Endothelial cell of umbilical vein (primary cell): ENCODE measurements at regions of chr1 and their contacts with region 1.

Region 1: GRCh38 chr1:100597061-100597741 is 59.3 kb downstream of the GPR88 start:
- DNase-seq: peak; percentile 95
- H3K4me3 ChIP-seq: no peak overlapping the region
- H3K27ac ChIP-seq: peak overlapping the region; percentile 93
- H3K4me1 ChIP-seq: peaks cover 28% of the 10 kb centered on the region
- H3K27me3 ChIP-seq: no peaks in the 10 kb centered on the region
- CTCF ChIP-seq: no peak
- POLR2A ChIP-seq: no peak

Region 2: DNA sequence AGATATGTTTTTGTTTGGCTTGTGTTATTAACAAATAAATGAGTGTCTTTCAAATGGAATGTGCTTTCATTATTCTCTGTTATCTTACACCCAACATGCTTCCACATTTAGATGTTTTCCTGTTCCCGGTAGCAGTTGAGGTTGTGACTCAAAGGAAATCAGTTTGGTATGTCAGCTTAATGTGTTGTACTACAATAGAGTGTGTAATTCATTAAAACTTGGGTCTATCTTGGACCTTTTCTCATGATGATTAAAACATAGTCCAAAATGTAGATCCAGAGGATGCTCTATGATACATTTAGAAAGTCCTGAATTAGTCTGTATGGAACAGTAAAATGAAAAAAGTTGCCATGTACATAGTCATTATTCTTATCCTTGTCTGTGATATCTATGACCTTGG is 304.5 kb before region 1 on chr1:
- CTCF ChIA-PET with region 1: no interaction called
- POLR2A ChIA-PET with region 1: no interaction called
- dilution Hi-C with region 1: no loop called
- intact Hi-C with region 1: loop called (anchors 2 kb)
- DNase-seq: peak; percentile 96
- H3K4me3 ChIP-seq: no peak overlapping the region
- H3K27ac ChIP-seq: peak overlapping the region; percentile 97
- H3K4me1 ChIP-seq: peaks cover 43% of the 10 kb centered on the region
- H3K27me3 ChIP-seq: no peaks in the 10 kb centered on the region
- CTCF ChIP-seq: no peak
- POLR2A ChIP-seq: peak; percentile 82

Region 3: GRCh38 chr1:100538913-100539835 is 58.0 kb before region 1 on chr1:
- CTCF ChIA-PET with region 1: no interaction called
- POLR2A ChIA-PET with region 1: no interaction called
- dilution Hi-C with region 1: no loop called
- intact Hi-C with region 1: loop called (anchors 1 kb)
- DNase-seq: peak; percentile 32
- H3K4me3 ChIP-seq: peak overlapping the region; percentile 28 to 44 (median 38)
- H3K27ac ChIP-seq: no peak overlapping the region
- H3K4me1 ChIP-seq: peaks cover 15% of the 10 kb centered on the region
- H3K27me3 ChIP-seq: peaks cover 0 to 7% of the 10 kb centered on the region in 2 experiments
- CTCF ChIP-seq: peak; percentile 17 to 49
- POLR2A ChIP-seq: no peak

Region 4: DNA sequence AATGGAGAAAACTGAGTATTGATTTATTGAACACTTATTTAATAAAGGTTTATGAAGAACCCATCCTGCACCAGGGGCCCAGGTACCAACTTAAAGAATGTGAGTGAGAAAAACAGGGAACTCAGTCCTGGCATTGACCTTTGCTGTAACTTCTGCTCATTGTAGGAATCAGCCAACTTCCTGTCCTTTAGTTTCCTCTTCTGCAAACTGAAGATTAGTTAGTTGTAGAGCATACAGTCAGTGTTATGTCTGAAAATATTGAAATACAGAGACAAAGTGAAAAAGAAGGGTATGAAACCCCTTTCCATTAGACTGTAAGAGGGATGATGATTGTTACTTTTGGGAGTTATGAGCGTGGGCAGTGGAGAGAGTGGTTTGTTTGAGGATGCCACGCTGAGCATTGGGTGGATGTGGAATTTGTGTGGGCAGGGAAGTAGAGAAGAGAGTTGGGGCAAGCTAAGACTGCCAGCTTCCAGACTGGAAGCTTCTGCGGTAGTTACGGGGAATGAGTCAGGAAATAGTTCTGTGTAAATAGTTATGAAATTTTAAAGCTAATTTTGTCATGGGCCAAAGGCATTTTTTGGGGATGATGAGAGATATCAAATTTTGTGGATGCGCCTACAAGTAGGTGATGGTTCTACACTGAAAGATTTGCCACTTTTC is 30.0 kb after region 1 on chr1:
- CTCF ChIA-PET with region 1: no interaction called
- POLR2A ChIA-PET with region 1: no interaction called
- dilution Hi-C with region 1: no loop called
- intact Hi-C with region 1: loop called (anchors 1 kb)
- DNase-seq: peak; percentile 76
- H3K4me3 ChIP-seq: no peak overlapping the region
- H3K27ac ChIP-seq: peak overlapping the region; percentile 49
- H3K4me1 ChIP-seq: peaks cover 36% of the 10 kb centered on the region
- H3K27me3 ChIP-seq: no peaks in the 10 kb centered on the region
- CTCF ChIP-seq: no peak
- POLR2A ChIP-seq: no peak

Region 5: GRCh38 chr1:100708476-100709062 is 111.4 kb after region 1 on chr1:
- CTCF ChIA-PET with region 1: no interaction called
- POLR2A ChIA-PET with region 1: no interaction called
- dilution Hi-C with region 1: no loop called
- intact Hi-C with region 1: loop called (anchors 2 kb)
- DNase-seq: peak; percentile 85
- H3K4me3 ChIP-seq: no peak overlapping the region
- H3K27ac ChIP-seq: peak overlapping the region; percentile 61
- H3K4me1 ChIP-seq: peaks cover 25% of the 10 kb centered on the region
- H3K27me3 ChIP-seq: no peaks in the 10 kb centered on the region
- CTCF ChIP-seq: no peak
- POLR2A ChIP-seq: no peak

Region 6: DNA sequence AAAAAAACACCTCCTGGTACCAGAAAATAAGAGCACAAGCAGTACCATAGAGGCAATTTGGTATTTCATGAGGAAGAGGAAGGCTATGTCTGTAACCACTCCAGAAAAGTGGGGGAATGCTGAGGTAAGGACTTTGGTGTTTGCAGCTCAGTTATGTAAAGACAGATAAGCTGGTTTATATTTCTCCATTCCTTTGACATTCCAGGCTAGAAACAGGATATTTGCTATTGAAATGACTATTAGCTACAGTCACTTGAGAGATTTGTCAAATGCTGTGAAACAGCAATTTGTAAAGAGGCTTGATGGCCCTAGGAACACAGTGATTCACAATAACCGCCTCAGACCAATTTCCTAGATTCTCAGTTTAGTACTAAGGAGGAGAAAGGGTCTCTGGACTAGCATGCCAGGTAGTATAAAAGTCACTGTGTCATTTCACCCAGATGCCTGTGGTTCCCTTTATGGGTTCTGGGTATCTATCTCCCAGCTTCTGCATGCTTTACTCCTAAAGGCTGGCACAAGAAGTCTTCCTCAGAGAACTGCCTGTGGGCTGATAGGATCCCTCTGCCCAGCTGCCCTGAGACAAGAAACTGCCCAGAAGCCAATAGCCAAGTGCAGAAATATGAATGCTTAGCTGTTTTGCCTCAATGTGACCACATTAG is 202.9 kb after region 1 on chr1:
- CTCF ChIA-PET with region 1: no interaction called
- POLR2A ChIA-PET with region 1: no interaction called
- dilution Hi-C with region 1: no loop called
- intact Hi-C with region 1: loop called (anchors 1 kb)
- DNase-seq: no peak
- H3K4me3 ChIP-seq: no peak overlapping the region
- H3K27ac ChIP-seq: peak overlapping the region; percentile 92
- H3K4me1 ChIP-seq: peaks cover 23% of the 10 kb centered on the region
- H3K27me3 ChIP-seq: no peaks in the 10 kb centered on the region
- CTCF ChIP-seq: no peak
- POLR2A ChIP-seq: no peak

Region 7: DNA sequence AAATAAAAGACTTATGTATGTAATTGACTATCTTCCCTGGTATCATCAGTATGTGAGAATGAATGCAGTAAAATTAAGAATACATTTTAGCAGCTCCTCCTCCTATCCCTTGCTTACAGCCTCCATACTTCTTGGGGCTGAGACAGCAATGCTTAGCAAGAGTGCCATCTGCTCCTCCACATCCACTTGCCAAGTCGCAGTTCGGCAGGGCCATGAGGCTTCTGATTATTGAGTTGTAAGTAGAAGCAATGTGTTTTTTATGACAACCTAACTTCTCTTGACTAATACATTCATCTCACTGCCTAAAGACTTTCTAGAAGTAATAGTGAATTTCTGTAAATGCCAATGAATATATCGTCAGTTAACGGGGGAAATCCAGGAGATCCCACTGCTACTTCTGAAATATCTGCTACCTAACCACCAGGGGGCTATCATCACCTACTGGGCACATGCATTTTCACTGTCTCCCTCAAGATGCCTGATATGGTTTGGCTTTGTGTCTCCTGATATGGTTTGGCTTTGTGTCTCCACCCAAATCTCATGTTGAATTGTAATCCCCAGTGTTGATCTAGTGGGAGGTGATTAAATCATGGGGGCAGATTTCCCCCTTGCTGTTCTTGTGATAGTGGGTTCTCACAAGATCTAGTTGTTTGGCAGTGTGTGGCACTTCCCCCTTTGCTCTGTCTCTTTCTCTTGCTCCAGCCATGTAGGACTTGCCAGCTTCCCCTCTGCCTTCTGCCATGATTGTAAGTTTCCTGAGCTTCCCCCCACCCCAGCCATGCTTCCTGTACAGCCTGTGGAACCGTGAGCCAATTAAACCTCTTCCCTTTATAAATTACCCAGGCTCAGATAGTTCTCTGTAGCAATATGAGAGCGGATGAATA is 237.8 kb after region 1 on chr1:
- CTCF ChIA-PET with region 1: interaction called, 3 read pairs
- POLR2A ChIA-PET with region 1: no interaction called
- dilution Hi-C with region 1: no loop called
- intact Hi-C with region 1: loop called (anchors 1 kb)
- DNase-seq: peak; percentile 26
- H3K4me3 ChIP-seq: no peak overlapping the region
- H3K27ac ChIP-seq: peak overlapping the region; percentile 95
- H3K4me1 ChIP-seq: peaks cover 22% of the 10 kb centered on the region
- H3K27me3 ChIP-seq: no peaks in the 10 kb centered on the region
- CTCF ChIP-seq: peak in 1 of 2 donors; percentile 13
- POLR2A ChIP-seq: no peak